BJ (cell line): ENCODE measurements at regions of chr15 and their contacts with region 1.

Region 1: GRCh38 chr15:97234851-97235610 is 725.5 kb upstream of the ARRDC4 start:
- DNase-seq: no peak
- H3K4me3 ChIP-seq: no peak overlapping the region
- H3K27me3 ChIP-seq: no peaks in the 10 kb centered on the region
- CTCF ChIP-seq: peak; percentile 87

Region 2: GRCh38 chr15:97248376-97248775 is 13.3 kb after region 1 on chr15:
- CTCF ChIA-PET with region 1: interaction called, 17 read pairs
- POLR2A ChIA-PET with region 1: no interaction called
- DNase-seq: no peak
- H3K4me3 ChIP-seq: no peak overlapping the region
- H3K27me3 ChIP-seq: no peaks in the 10 kb centered on the region
- CTCF ChIP-seq: no peak